ENCODE measurements at regions of chr17 and their contacts with region 1.

Region 1: GRCh38 chr17:76005263-76006149 is 4.9 kb downstream of the CDK3 start:
- DNase-seq: peak; percentile 36 to 95 (median 82)

Region 2: DNA sequence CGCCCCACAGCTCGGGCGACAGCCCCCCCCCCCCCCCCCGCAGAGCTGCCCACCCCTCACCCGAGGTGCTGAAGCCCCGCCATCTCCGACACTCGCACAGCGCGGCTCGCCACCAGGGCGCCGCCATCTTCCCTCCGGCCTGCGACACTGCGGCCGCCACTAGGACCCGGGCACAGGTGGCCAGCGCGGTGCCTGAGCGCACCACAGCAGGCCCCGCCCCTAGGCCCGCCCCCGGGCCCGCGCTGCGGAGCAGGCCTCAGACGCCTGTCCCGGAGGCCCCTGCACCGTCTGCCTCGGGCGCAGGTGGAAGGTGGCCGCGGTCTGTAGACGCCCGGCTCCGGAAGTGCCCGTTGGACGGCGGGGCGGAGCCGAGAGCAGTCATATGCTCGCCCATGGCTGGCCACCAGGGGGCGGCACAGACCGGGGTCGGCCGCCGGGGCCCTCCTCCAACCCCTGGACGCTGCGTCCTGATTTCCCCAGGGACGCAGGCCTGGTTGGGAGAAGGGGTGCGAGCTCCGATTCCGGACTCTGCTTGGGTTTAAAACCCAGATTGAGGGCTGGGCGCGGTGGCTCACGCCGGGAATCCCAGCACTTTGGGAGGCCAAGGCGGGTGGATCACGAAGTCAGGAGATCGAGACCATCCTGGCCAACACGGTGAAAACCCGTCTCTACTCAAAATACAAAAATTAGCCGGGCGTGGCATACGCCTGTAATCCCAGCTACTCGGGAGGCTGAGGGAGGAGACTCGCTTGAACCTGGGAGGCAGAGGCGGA is 100.6 kb before region 1 on chr17 and contains the start of gene MRPL38:
- intact Hi-C with region 1: loop called (anchors 2 kb)
- DNase-seq: peak; percentile 67 to 94 (median 88)

Region 3: GRCh38 chr17:75927286-75927922 is 78.1 kb before region 1 on chr17:
- intact Hi-C with region 1: no loop called
- DNase-seq: peak in 1 of 42 donors; percentile 38

Region 4: GRCh38 chr17:76088036-76088867 is 82.7 kb after region 1 on chr17:
- intact Hi-C with region 1: no loop called
- DNase-seq: peak in 1 of 42 donors; percentile 8